Lower lobe of right lung (tissue), 2 donors: ENCODE measurements at regions of chr13 and their contacts with region 1.

Region 1: DNA sequence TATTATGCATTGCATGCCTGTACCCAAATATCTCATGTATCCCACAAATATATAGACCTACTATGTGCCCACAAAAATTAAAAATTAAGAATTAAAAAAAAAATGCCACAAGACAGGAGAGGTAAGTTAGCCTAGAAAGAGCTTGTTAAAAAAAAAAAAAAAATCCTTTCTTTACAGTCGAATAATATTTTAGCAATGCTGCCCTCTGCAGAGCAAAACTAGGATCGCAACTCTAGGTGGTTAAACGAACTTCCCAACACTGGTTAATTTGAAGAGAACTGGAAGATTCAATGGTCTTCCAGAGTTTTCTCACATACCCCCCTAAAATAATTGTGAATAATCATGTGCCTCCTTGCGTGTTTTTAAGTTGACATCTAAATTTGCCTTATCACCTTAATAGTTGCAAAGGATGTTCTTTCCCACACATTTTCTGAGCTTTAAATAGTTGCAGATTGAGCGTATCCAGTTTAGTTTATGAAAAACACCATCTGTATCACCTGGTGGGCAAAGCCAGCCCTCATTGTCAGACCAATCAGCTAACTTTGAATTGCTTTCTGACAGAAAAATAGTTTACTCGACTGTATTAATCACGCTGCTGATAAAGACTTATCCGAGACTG is 47.4 kb upstream of the RCBTB2 start:
- DNase-seq: no peak
- ATAC-seq: peak; percentile 68 to 80
- H3K4me3 ChIP-seq: no peak overlapping the region
- H3K27ac ChIP-seq: no peak overlapping the region
- H3K4me1 ChIP-seq: peaks cover 29% of the 10 kb centered on the region
- H3K27me3 ChIP-seq: no peaks in the 10 kb centered on the region
- CTCF ChIP-seq: peak; percentile 78

Region 2: DNA sequence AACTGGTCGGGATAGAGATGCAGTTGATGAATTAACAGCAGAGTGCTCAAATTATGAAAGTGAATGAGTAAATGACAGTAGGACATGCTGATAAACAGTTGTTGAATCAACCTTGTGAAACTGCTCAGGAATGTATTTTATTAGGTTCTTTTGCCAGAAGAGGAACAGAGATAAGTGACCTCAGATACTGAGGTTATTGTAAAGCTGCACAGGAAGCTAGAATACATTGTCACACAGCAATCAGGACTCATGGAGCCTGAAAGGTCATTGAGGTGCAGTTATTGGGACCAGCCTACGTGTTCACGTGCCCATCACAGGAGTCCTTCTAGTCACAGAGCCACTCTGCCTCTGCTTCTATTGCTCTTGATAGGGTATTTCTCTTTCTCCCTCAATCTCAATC is 437.9 kb before region 1 on chr13:
- intact Hi-C with region 1: no loop called
- DNase-seq: no peak
- ATAC-seq: peak; percentile 39 to 55
- H3K4me3 ChIP-seq: no peak overlapping the region
- H3K27ac ChIP-seq: no peak overlapping the region
- H3K4me1 ChIP-seq: peaks cover 25% of the 10 kb centered on the region
- H3K27me3 ChIP-seq: no peaks in the 10 kb centered on the region
- CTCF ChIP-seq: no peak

Region 3: GRCh38 chr13:48334534-48335127 is 245.7 kb before region 1 on chr13:
- intact Hi-C with region 1: loop called (anchors 10 kb)
- DNase-seq: no peak
- ATAC-seq: peak in 1 of 2 donors; percentile 74
- H3K4me3 ChIP-seq: no peak overlapping the region
- H3K27ac ChIP-seq: no peak overlapping the region
- H3K4me1 ChIP-seq: peaks cover 7% of the 10 kb centered on the region
- H3K27me3 ChIP-seq: no peaks in the 10 kb centered on the region
- CTCF ChIP-seq: peak; percentile 61